A673 (cell line): ENCODE measurements at regions of chr11 and their contacts with region 1.

Region 1: GRCh38 chr11:37280200-37280599 is 682.2 kb upstream of the RAG2 start:
- DNase-seq: peak; percentile 45
- H3K4me3 ChIP-seq: no peak overlapping the region
- H3K27ac ChIP-seq: peak overlapping the region; percentile 100
- H3K4me1 ChIP-seq: peaks cover 61% of the 10 kb centered on the region
- H3K27me3 ChIP-seq: no peaks in the 10 kb centered on the region
- CTCF ChIP-seq: no peak

Region 2: DNA sequence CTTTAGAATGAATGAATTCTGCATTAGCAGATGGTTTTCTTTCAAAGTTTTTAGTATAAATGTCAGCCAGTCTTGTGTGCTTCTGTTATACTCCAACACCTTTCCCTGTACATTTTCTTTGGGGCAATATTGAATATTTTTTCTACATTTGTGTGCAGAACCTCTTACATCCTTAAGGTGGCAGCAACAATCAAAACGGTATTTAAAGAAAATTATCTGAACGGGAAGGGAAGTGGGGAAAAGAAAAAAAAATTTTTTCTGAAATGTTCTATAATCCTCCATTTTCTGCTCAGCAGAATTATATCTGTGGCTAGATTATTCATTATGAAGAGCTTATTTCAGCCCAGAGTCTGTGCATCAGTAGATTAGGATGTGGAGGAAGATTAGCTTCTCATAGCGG is 334.8 kb before region 1 on chr11:
- CTCF ChIA-PET with region 1: no interaction called
- POLR2A ChIA-PET with region 1: no interaction called
- intact Hi-C with region 1: loop called (anchors 5 kb)
- DNase-seq: peak; percentile 89
- H3K4me3 ChIP-seq: no peak overlapping the region
- H3K27ac ChIP-seq: no peak overlapping the region
- H3K4me1 ChIP-seq: peaks cover 48% of the 10 kb centered on the region
- H3K27me3 ChIP-seq: no peaks in the 10 kb centered on the region
- CTCF ChIP-seq: peak; percentile 97

Region 3: DNA sequence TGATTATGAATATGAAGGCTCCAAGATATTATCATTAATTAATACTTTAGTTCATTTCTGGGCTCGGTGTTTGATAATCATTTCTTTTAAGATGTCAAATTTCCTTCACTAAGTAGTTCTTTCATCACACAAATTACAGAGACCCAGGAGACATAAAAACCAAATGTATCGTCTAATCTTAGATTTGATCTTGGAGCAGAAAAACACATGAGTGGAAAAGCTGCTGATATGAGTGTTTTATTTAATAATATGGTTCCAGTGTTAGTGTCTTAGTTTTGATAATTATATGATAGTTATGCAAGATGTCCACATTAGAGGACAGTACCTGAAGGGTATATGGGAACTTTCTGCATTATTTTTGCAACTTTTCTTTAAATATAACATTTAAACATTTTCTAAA is 187.7 kb before region 1 on chr11:
- CTCF ChIA-PET with region 1: no interaction called
- POLR2A ChIA-PET with region 1: interaction called, 20 read pairs
- intact Hi-C with region 1: no loop called
- DNase-seq: no peak
- H3K4me3 ChIP-seq: no peak overlapping the region
- H3K27ac ChIP-seq: no peak overlapping the region
- H3K4me1 ChIP-seq: peaks cover 26% of the 10 kb centered on the region
- H3K27me3 ChIP-seq: no peaks in the 10 kb centered on the region
- CTCF ChIP-seq: no peak

Region 4: DNA sequence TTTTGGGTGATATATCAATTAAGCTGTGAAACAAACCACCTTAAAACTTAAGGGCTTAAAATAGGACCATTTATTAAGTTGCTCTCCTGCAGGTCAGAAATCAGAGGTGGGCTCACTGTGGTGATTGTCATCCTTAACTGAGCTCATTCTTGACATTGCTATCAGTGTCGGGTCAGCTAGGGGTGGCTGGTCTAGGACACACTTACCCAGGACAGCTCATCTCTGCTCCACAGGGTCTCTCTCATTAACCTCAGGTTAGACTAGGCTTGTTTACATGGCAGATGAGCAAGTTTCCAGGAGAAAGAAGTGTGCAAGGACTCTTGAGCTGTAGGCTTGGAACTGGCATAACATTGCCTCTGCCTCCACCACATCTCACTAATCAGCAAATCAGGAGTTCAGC is 81.1 kb before region 1 on chr11:
- CTCF ChIA-PET with region 1: no interaction called
- POLR2A ChIA-PET with region 1: no interaction called
- intact Hi-C with region 1: no loop called
- DNase-seq: no peak
- H3K4me3 ChIP-seq: no peak overlapping the region
- H3K27ac ChIP-seq: no peak overlapping the region
- H3K4me1 ChIP-seq: peaks cover 6% of the 10 kb centered on the region
- H3K27me3 ChIP-seq: no peaks in the 10 kb centered on the region
- CTCF ChIP-seq: no peak

Region 5: GRCh38 chr11:37449146-37449545 is 168.9 kb after region 1 on chr11:
- CTCF ChIA-PET with region 1: no interaction called
- POLR2A ChIA-PET with region 1: no interaction called
- intact Hi-C with region 1: loop called (anchors 1 kb)
- DNase-seq: peak; percentile 94
- H3K4me3 ChIP-seq: no peak overlapping the region
- H3K27ac ChIP-seq: no peak overlapping the region
- H3K4me1 ChIP-seq: peaks cover 50% of the 10 kb centered on the region
- H3K27me3 ChIP-seq: no peaks in the 10 kb centered on the region
- CTCF ChIP-seq: peak; percentile 92

Region 6: GRCh38 chr11:38019072-38019755 is 739.0 kb after region 1 on chr11:
- CTCF ChIA-PET with region 1: no interaction called
- POLR2A ChIA-PET with region 1: no interaction called
- intact Hi-C with region 1: no loop called
- DNase-seq: peak; percentile 23
- H3K4me3 ChIP-seq: no peak overlapping the region
- H3K27ac ChIP-seq: no peak overlapping the region
- H3K4me1 ChIP-seq: peaks cover 5% of the 10 kb centered on the region
- H3K27me3 ChIP-seq: no peaks in the 10 kb centered on the region
- CTCF ChIP-seq: peak; percentile 36; the same call in 1 of the 2 replicates

Region 7: DNA sequence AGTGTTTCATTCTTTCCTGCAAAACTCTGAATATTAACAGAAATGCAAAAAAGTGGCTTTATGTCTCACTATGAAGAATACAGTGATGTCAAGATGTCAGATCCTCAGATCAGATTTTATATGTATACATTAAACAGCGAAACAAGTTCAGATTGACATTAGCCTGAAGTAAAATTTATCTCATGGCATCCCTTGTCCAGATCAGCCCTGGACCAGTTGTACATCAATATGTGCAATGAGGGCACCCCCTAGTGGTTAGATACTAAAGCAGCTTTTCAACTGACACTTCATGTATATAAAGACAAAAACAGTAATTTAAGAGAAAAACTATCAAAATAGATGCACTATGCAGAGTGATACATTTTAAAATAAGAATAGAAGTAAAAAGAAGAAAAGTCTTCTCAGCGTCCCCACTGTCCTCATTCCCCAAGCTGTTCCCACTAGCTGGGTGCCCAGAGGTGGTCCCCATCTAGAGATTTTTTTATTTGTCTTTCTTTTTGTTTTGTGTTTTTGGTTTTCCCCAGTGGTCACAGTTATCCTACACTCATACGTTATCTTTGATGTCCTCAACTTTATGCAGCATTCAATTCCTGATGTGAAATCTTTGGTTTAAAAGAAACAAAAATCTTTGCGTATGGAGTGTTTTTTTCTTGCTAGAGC is 1511.2 kb after region 1 on chr11:
- CTCF ChIA-PET with region 1: no interaction called
- POLR2A ChIA-PET with region 1: no interaction called
- intact Hi-C with region 1: loop called (anchors 5 kb)
- DNase-seq: peak; percentile 96
- H3K4me3 ChIP-seq: no peak overlapping the region
- H3K27ac ChIP-seq: no peak overlapping the region
- H3K4me1 ChIP-seq: peaks cover 10% of the 10 kb centered on the region
- H3K27me3 ChIP-seq: no peaks in the 10 kb centered on the region
- CTCF ChIP-seq: peak; percentile 100